Spleen (tissue), 13 donors: ENCODE measurements at regions of chr1 and their contacts with region 1.

Region 1: DNA sequence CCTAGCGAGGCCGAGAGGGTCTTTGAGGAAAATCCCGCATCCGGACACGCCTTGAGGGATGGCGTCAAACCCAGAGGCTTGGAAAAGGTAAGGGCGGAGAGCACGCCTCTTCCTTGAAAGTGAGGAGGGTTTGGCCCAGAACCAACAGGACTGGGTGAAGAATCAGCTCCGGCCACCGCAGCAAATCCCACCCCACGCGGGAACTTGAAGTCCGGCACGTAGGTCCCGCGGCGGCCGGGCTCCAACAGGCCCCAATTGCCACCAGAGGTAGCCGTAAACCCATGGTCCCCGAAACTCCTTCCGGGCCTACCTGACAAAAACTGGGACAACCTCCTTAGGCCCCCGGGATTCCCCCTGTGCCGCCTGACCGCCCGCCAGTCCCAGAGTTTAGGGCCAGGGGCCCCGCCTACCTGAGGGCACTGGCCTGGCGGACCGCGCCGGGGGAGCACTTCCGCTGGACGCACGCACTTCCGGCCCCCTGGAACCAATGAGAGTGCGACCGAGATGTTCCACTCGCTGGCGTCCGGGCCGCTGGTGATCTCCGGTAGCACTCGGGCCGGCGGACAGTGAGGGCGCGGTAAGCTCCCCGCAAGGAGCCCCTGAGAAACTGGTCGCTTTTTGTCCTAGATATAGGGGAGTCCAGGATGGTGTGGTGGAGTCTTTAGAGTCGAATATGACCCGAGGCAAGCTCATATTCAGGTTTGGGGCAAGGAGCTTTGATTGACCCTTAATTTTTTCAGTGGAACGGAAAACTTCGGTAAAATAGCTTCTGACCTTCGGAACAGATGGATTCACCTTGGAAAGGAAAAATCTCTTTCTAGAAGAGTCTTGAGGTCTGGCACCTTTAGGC is at the starts of genes LZIC and NMNAT1:
- DNase-seq: peak; percentile 97
- H3K4me3 ChIP-seq: peak within 1 kb of the TSS; percentile 69 to 96 (median 85)
- H3K27ac ChIP-seq: peak within 1 kb of the TSS; percentile 55 to 95 (median 88)
- H3K4me1 ChIP-seq: peaks cover 9 to 57% (median 33%) of the 10 kb centered on the region in 6 donors
- H3K27me3 ChIP-seq: no peaks in the 10 kb centered on the region
- CTCF ChIP-seq: peak in 3 of 11 experiments; percentile 16 to 46 (median 44)
- POLR2A ChIP-seq: peak; percentile 78 to 90 (median 83)
- total RNA-seq, gene LZIC: 16.4 to 24.3 (median 23.1) TPM
- total RNA-seq, gene NMNAT1: 6.0 to 13.0 (median 8.8) TPM

Region 2: DNA sequence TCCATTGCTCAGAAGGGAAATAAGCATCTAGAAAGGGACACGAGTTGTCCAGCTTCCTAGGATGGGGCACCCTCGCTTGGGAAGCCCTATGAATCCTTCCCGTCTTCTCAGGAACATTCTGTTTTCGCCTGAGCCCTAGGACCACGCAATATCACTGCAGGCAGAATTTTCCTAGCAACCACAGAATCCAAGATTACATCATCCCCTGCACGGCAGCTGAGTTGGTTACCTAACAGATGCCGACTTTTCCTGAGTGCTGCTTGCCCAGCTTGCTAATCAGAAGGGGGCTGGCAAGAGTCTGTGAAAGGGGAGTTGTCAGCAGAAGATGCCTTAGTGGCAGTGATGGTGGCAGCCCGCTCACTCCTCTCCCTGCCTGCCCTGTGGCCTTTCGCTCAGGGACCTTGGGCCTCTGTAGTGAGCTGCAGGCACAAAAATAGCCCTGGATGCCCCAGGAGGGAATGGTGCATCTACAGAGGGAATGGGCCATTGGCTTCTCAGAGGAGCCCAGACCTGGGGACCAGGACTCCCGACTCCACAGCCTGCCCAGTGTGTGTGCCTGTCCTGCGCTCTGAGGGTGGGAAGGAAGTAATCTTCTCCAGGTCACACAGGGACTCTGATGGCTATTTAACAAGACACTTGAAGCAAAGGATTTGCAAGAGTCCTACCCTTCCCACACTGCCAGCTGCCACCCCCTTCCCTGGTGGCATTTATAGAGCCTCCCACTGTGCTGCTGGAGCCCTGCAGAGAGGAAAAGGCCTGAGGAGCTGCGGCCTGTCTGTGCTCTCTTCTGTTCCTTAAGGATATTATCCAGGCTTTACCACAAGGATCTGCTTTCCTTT is 90.5 kb before region 1 on chr1:
- intact Hi-C with region 1: no loop called
- DNase-seq: no peak
- H3K4me3 ChIP-seq: no peak overlapping the region
- H3K27ac ChIP-seq: no peak overlapping the region
- H3K4me1 ChIP-seq: peaks cover 0 to 22% (median 11%) of the 10 kb centered on the region in 6 donors
- H3K27me3 ChIP-seq: no peaks in the 10 kb centered on the region
- CTCF ChIP-seq: no peak
- POLR2A ChIP-seq: no peak

Region 3: DNA sequence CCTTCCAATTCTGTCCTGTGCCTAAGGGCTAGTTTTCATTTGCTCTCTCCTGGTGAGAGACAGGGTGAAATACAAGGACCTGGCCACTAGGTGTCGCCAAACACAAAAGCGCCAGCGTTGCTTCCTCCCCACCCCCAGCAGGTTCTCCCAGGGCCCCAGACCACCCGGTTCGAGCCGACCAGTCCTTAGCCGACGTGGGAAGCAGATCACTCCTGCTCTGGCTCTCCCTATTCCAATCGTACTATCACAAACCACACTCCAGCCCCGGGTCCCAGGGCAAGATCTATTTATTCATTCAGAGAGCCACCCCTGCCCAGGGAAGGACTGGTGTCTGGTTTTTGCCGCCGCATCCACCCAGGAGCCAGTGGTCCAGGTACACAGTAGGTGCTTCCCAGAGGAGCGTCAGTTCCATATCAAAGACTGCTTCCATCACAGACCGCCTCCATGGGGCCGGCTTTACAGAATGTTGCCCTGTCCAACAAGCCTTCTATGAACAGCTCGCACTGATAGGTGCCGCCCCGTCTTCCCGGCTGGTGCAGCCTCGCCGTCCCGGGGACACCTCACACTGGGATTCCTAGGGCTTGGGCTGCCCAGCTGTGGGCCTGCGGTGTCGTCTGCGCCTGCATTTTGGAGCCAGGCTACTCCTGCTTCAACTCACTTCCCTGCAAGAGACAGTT is 68.1 kb before region 1 on chr1:
- intact Hi-C with region 1: loop called (anchors 5 kb)
- DNase-seq: peak; percentile 89
- H3K4me3 ChIP-seq: peak overlapping the region in 1 of 8 donors; percentile 12
- H3K27ac ChIP-seq: peak overlapping the region in 1 of 8 donors; percentile 43
- H3K4me1 ChIP-seq: peaks cover 9 to 34% (median 20%) of the 10 kb centered on the region in 6 donors
- H3K27me3 ChIP-seq: peaks cover 0 to 19% (median 0%) of the 10 kb centered on the region in 7 donors
- CTCF ChIP-seq: peak; percentile 84 to 96 (median 92)
- POLR2A ChIP-seq: no peak

Region 4: GRCh38 chr1:10032590-10033358 is 89.6 kb after region 1 on chr1 and contains the start of gene UBE4B:
- intact Hi-C with region 1: loop called (anchors 10 kb)
- DNase-seq: peak; percentile 100
- H3K4me3 ChIP-seq: peak within 1 kb of the TSS; percentile 67 to 99 (median 96)
- H3K27ac ChIP-seq: peak within 1 kb of the TSS; percentile 79 to 98 (median 96)
- H3K4me1 ChIP-seq: peaks cover 19 to 65% (median 37%) of the 10 kb centered on the region in 6 donors
- H3K27me3 ChIP-seq: no peaks in the 10 kb centered on the region
- CTCF ChIP-seq: peak; percentile 77 to 99 (median 97)
- POLR2A ChIP-seq: peak in 1 of 3 donors; percentile 22
- total RNA-seq, gene UBE4B: 27.0 to 53.8 (median 40.8) TPM